AG04449 (cell line): ENCODE measurements at regions of chr11 and their contacts with region 1.

Region 1: DNA sequence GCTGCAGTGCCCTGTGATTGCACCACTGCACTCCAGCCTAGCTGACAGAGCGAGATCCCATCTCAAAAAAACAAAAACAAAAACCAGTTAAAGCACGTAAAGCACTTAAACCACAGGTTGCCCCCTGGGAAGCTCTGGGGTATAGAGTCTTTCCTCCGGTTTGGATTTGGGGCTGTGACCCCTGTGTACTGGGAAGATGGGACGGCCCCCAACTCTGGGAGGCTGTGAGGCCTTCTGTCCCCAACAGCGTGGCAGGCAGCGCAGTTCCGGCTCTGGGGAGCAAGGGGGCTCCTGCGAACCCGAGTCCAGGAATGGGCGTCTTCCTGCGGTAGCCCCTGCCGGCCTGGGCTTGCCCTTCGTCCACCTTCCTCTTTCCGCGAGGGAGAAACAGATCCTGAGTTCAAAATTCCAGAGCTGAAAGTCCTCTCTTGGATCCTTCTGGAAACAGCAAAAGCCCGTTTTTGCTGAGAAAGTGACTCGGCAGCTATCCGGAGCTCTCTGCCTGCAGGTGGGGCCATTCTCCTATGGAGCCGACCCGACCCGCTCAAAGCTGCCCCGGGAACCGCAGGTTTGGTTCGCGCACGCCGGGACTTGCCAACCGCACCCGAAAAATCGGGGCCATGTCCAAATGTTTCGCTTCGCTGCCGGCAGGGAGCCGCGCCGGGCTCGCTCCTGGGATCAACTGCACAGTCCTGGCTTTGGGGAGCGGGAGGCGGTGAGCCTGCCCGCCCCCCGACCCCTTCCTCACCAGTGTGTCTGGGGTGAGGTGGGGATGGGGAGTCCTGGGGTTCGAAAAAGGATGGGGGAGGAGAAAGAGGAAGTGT is 36.3 kb upstream of the POLA2 start:
- DNase-seq: no peak
- H3K4me3 ChIP-seq: peak overlapping the region; percentile 49
- CTCF ChIP-seq: peak; percentile 47

Region 2: DNA sequence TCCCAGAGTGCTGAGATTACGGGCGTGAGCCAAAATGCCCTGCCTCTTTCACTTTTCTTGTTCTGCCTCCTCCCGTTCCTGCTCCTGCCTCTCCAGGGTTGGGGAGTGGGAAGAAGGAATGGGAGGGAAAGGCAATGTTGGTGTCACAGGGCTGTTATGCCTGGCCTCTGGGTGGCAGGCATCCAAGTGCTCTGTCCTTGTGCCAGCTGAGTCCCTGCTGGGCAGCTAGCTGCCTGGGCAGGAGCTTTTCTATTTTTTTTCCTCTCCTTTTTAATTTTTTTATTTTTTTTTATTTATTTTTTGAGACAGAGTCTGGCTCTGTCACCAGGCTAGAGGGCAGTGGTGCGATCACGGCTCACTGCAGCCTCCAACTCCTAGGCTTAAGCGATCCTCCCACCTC is 188.6 kb before region 1 on chr11:
- CTCF ChIA-PET with region 1: no interaction called
- POLR2A ChIA-PET with region 1: no interaction called
- DNase-seq: no peak
- H3K4me3 ChIP-seq: no peak overlapping the region
- CTCF ChIP-seq: no peak

Region 3: GRCh38 chr11:65083834-65084597 is 141.5 kb before region 1 on chr11 and contains the starts of genes CDCA5 and ZFPL1:
- CTCF ChIA-PET with region 1: no interaction called
- POLR2A ChIA-PET with region 1: no interaction called
- DNase-seq: peak; percentile 59
- H3K4me3 ChIP-seq: peak within 1 kb of the TSS; percentile 97
- CTCF ChIP-seq: no peak

Region 4: GRCh38 chr11:65204646-65205601 is 20.6 kb before region 1 on chr11:
- CTCF ChIA-PET with region 1: interaction called, 31 read pairs
- POLR2A ChIA-PET with region 1: no interaction called
- DNase-seq: no peak
- H3K4me3 ChIP-seq: no peak overlapping the region
- CTCF ChIP-seq: peak; percentile 88

Region 5: DNA sequence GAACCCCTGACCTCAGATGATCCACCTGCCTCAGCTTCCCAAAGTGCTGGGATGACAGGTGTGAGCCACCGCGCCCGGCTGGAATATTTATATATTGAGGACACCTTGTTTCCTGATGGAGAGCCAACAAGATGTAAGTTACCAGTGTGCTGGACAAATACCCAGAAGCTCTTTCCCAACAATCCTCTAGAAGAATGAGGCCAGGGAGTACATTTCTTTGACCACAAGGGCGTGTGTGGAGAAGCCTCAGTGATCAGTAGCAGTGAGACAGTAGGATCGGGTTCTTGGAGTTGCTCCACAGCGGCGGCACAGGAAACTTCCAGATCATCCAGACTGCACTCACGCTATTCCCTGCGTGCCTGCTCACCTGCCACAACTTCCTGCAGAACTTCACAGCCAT is 26.0 kb after region 1 on chr11:
- CTCF ChIA-PET with region 1: interaction called, 22 read pairs
- POLR2A ChIA-PET with region 1: no interaction called
- DNase-seq: no peak
- H3K4me3 ChIP-seq: no peak overlapping the region
- CTCF ChIP-seq: no peak

Region 6: DNA sequence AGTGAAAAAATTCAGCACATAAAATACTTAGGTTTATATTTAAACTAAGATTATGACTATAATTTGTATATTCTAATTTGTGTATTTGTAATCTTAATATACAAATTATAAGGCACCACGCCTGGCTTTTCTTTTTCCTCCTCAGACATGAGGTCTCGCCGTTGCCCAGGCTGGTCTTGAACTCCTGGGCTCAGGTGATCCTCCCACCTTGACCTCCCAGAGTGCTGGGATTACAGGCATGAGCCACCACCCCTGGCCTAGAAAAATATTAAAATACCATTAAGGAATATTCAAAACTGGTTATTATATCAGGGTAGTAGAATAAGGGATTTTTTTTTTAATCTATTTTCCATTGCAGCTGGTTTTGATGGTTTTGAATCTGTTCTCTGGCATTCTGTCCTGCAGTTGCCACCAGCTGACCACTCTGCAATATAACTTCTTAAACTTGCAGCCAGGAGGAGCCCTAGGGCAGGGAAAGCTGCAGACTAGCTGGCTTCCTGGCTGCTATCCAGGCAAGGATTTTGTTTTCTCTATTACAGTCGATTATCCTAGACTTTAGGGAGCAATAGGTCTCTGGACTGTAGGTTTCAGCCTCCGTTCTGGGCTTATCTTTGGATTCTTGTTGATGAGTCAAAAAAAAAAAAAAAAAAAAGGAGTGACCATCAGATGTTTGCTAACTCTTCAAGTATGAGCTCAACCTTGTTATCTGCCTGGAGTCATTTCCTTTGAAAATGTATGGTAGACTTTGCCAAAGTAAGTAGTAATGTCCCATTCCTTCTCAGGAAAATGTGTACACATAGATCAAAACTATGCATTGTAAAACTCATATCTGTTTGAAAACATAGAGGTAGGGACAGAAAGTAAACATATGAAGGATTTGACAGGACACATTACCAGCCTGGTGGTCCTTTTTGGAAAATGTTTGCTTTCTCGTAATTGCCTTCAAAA is 49.5 kb after region 1 on chr11:
- CTCF ChIA-PET with region 1: interaction called, 12 read pairs
- POLR2A ChIA-PET with region 1: no interaction called
- DNase-seq: peak; percentile 92
- H3K4me3 ChIP-seq: no peak overlapping the region
- CTCF ChIP-seq: peak; percentile 69

Region 7: DNA sequence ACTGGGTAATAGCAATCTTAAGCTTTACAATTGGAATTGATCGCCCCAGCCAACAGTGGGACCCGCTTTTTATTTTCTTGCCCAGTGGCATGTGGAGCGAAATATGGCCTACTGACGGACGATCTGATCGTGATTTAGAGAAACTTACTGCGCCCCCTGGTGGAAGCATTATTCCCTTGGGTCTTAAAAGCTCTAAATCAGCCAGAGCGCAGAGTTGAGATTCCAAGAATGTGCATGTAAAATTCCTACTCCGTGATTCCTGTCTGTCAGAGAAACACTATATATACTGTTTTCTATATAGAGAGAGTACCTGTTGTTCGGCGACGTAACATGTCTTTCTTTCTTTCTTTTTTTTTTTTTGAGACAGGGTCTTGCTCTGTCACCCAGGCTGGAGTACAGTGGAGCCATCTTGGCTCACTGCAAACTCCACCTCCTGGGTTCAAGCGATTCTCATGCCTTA is 104.5 kb after region 1 on chr11:
- CTCF ChIA-PET with region 1: interaction called, 102 read pairs
- POLR2A ChIA-PET with region 1: interaction called, 4 read pairs
- DNase-seq: peak; percentile 61
- H3K4me3 ChIP-seq: no peak overlapping the region
- CTCF ChIP-seq: peak; percentile 66

Region 8: GRCh38 chr11:65354265-65355012 is 128.9 kb after region 1 on chr11 and contains the start of gene TIGD3:
- CTCF ChIA-PET with region 1: interaction called, 13 read pairs
- POLR2A ChIA-PET with region 1: no interaction called
- DNase-seq: no peak
- H3K4me3 ChIP-seq: peak within 1 kb of the TSS; percentile 65
- CTCF ChIP-seq: no peak